ENCODE measurements at regions of chr16 and their contacts with region 1.

Region 1: GRCh38 chr16:87492721-87493607 is at the start of gene ZCCHC14:
- DNase-seq: peak; percentile 97
- ATAC-seq: peak; percentile 75
- H3K4me3 ChIP-seq: peak within 1 kb of the TSS; percentile 67 to 93 (median 85)
- H3K27ac ChIP-seq: peak within 1 kb of the TSS; percentile 63
- H3K4me1 ChIP-seq: peaks cover 70% of the 10 kb centered on the region
- H3K27me3 ChIP-seq: no peaks in the 10 kb centered on the region; a peak in 1 of 5 replicates
- CTCF ChIP-seq: no peak
- EP300 ChIP-seq: peak; percentile 8 to 46; a peak in 2 of 4 replicates
- POLR2A ChIP-seq: peak; percentile 40 to 91; a peak in 3 of 4 replicates
- RAD21 ChIP-seq: peak; percentile 86
- total RNA-seq, gene ZCCHC14: 12.5 and 20.4 TPM in 2 replicates

Region 2: GRCh38 chr16:87540945-87541877 is 48.2 kb after region 1 on chr16:
- CTCF ChIA-PET with region 1: no interaction called
- POLR2A ChIA-PET with region 1: interaction called, 11 read pairs
- in situ Hi-C with region 1: loop called (anchors 5 kb)
- intact Hi-C with region 1: no loop called
- DNase-seq: no peak
- ATAC-seq: no peak
- H3K4me3 ChIP-seq: no peak overlapping the region; a peak in 1 of 6 replicates
- H3K27ac ChIP-seq: no peak overlapping the region
- H3K4me1 ChIP-seq: peaks cover 79% of the 10 kb centered on the region
- H3K27me3 ChIP-seq: peaks cover 7 to 59% of the 10 kb centered on the region in 2 experiments
- CTCF ChIP-seq: no peak
- EP300 ChIP-seq: no peak
- POLR2A ChIP-seq: no peak
- RAD21 ChIP-seq: no peak